Activated CD4-positive, alpha-beta T cell treated with anti-CD3 and anti-CD28 coated beads for 36 hours (primary cell): ENCODE measurements at regions of chr9 and their contacts with region 1.

Region 1: DNA sequence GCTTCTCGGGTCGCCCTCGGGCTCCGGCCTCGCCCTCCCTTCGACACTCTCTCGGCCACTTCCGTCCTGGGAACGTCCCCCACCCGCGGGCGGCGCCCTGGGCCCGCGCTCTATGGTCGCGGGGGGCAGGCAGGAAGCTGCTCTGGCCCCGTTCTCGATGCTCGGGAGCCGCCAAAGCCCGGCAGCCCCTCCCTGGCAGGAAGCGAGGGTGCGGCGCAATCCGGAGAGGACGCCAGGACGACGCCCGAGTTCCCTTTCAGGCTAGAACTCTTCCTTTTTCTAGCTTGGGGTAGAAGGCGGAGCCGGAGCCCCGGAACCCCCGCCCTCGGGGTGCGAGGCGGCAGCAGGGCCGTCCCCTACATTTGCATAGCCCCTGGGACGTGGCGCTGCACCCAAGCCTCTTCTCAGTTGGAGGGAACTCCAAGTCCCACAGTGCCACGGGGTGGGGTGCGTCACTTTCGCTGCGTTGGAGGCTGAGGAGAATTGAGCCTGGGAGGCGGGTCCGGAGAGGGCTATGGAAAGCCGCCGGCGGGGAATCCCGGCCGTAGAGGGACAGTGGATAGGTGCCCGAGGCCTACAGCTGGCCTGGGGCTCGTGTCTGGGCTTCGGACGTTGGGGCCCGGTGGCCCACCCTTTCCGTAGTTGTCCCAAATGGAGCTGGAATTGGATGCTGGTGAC is at the starts of genes CREB3 and TLN1:
- DNase-seq: peak; percentile 98
- ATAC-seq: peak; percentile 87
- H3K4me3 Mint-ChIP-seq: no peak within 1 kb of the TSS
- H3K27ac Mint-ChIP-seq: peak within 1 kb of the TSS; percentile 93
- H3K4me1 Mint-ChIP-seq: peaks cover 21% of the 10 kb centered on the region
- H3K27me3 Mint-ChIP-seq: no peaks in the 10 kb centered on the region
- total RNA-seq, gene CREB3: 24.0 to 26.0 TPM
- total RNA-seq, gene TLN1: 217 to 238 TPM

Region 2: DNA sequence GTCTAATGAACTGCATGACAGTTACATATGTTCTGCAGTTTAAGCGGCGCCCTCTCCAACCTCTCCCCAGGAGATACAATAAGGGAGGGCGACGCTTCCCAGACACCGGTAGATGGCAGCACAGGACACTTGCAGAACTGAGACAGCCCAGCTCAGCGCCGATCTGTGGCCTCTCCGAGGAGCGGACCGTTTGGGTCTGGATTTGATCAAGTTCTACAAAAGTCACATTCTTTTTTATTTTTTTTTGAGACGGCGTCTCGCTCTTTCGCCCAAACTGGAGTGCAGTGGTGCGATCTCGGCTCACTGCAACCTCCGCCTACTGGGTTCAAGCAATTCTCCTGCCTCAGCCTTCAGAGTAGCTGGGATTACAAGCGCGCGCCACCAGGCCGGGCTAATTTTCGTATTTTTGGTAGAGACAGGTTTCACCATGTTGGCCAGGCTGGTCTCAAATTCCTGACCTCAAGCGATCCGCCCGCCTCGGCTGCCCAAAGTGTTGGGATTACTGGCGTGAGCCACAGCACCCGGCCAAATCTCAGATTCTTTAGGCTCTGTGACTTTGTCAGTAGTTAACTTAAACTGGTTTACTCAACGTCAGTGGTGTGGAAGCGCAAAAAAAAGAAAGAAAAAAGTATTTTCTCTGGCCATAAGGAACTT is 615.2 kb before region 1 on chr9:
- CTCF ChIA-PET with region 1: no interaction called
- POLR2A ChIA-PET with region 1: no interaction called
- intact Hi-C with region 1: loop called in 1 of 2 experiments (anchors 1 kb)
- DNase-seq: peak; percentile 94
- ATAC-seq: peak; percentile 66
- H3K4me3 Mint-ChIP-seq: peak overlapping the region; percentile 77
- H3K27ac Mint-ChIP-seq: peak overlapping the region; percentile 87
- H3K4me1 Mint-ChIP-seq: peaks cover 44% of the 10 kb centered on the region
- H3K27me3 Mint-ChIP-seq: no peaks in the 10 kb centered on the region

Region 3: GRCh38 chr9:35611230-35611797 is 120.9 kb before region 1 on chr9:
- CTCF ChIA-PET with region 1: interaction called, 16 read pairs
- POLR2A ChIA-PET with region 1: no interaction called
- intact Hi-C with region 1: loop called in 1 of 2 experiments (anchors 5 kb)
- DNase-seq: peak; percentile 74
- ATAC-seq: peak; percentile 96
- H3K4me3 Mint-ChIP-seq: no peak overlapping the region
- H3K27ac Mint-ChIP-seq: no peak overlapping the region
- H3K4me1 Mint-ChIP-seq: peaks cover 13% of the 10 kb centered on the region
- H3K27me3 Mint-ChIP-seq: no peaks in the 10 kb centered on the region

Region 4: GRCh38 chr9:35690431-35691333 is 41.6 kb before region 1 on chr9:
- CTCF ChIA-PET with region 1: interaction called, 68 read pairs
- POLR2A ChIA-PET with region 1: interaction called, 3 read pairs
- intact Hi-C with region 1: loop called in 1 of 2 experiments (anchors 2 kb)
- DNase-seq: peak; percentile 56
- ATAC-seq: no peak
- H3K4me3 Mint-ChIP-seq: peak overlapping the region; percentile 71
- H3K27ac Mint-ChIP-seq: peak overlapping the region; percentile 47
- H3K4me1 Mint-ChIP-seq: peaks cover 23% of the 10 kb centered on the region
- H3K27me3 Mint-ChIP-seq: no peaks in the 10 kb centered on the region

Region 5: GRCh38 chr9:35748858-35749514 is 16.7 kb after region 1 on chr9 and contains the starts of genes GBA2 and RGP1:
- CTCF ChIA-PET with region 1: interaction called, 54 read pairs
- POLR2A ChIA-PET with region 1: interaction called, 14 read pairs
- intact Hi-C with region 1: loop called (anchors 1 kb)
- DNase-seq: peak; percentile 83
- ATAC-seq: peak; percentile 79
- H3K4me3 Mint-ChIP-seq: peak within 1 kb of the TSS; percentile 93
- H3K27ac Mint-ChIP-seq: peak within 1 kb of the TSS; percentile 88
- H3K4me1 Mint-ChIP-seq: peaks cover 40% of the 10 kb centered on the region
- H3K27me3 Mint-ChIP-seq: no peaks in the 10 kb centered on the region
- total RNA-seq, gene GBA2: 19.6 to 23.7 TPM
- total RNA-seq, gene RGP1: 14.0 to 15.5 TPM

Region 6: GRCh38 chr9:35882263-35882848 is 150.1 kb after region 1 on chr9:
- CTCF ChIA-PET with region 1: interaction called, 7 read pairs
- POLR2A ChIA-PET with region 1: no interaction called
- intact Hi-C with region 1: loop called (anchors 1 kb)
- DNase-seq: peak; percentile 89
- ATAC-seq: peak; percentile 77
- H3K4me3 Mint-ChIP-seq: no peak overlapping the region
- H3K27ac Mint-ChIP-seq: no peak overlapping the region
- H3K4me1 Mint-ChIP-seq: no peaks in the 10 kb centered on the region
- H3K27me3 Mint-ChIP-seq: peaks cover 4% of the 10 kb centered on the region

Region 7: GRCh38 chr9:36110434-36110833 is 378.2 kb after region 1 on chr9:
- CTCF ChIA-PET with region 1: no interaction called
- POLR2A ChIA-PET with region 1: no interaction called
- intact Hi-C with region 1: no loop called
- DNase-seq: no peak
- ATAC-seq: no peak
- H3K4me3 Mint-ChIP-seq: no peak overlapping the region
- H3K27ac Mint-ChIP-seq: no peak overlapping the region
- H3K4me1 Mint-ChIP-seq: peaks cover 10% of the 10 kb centered on the region
- H3K27me3 Mint-ChIP-seq: no peaks in the 10 kb centered on the region

Region 8: GRCh38 chr9:36572515-36573418 is 840.5 kb after region 1 on chr9 and contains the start of gene MELK:
- CTCF ChIA-PET with region 1: no interaction called
- POLR2A ChIA-PET with region 1: no interaction called
- intact Hi-C with region 1: loop called in 1 of 2 experiments (anchors 5 kb)
- DNase-seq: peak; percentile 89
- ATAC-seq: peak; percentile 73
- H3K4me3 Mint-ChIP-seq: peak within 1 kb of the TSS; percentile 97
- H3K27ac Mint-ChIP-seq: peak within 1 kb of the TSS; percentile 85
- H3K4me1 Mint-ChIP-seq: peaks cover 27% of the 10 kb centered on the region
- H3K27me3 Mint-ChIP-seq: no peaks in the 10 kb centered on the region
- total RNA-seq, gene MELK: 63.9 to 66.1 TPM